SK-N-SH (cell line): ENCODE measurements at regions of chr15 and their contacts with region 1.

Region 1: GRCh38 chr15:83571820-83572707 is 81.9 kb upstream of the ADAMTSL3 start:
- DNase-seq: peak; percentile 32
- H3K4me3 ChIP-seq: no peak overlapping the region
- H3K27ac ChIP-seq: no peak overlapping the region
- H3K4me1 ChIP-seq: no peaks in the 10 kb centered on the region
- H3K27me3 ChIP-seq: no peaks in the 10 kb centered on the region; the same call in 1 of the 2 replicates
- CTCF ChIP-seq: peak; percentile 69
- EP300 ChIP-seq: no peak
- RAD21 ChIP-seq: peak; percentile 53

Region 2: GRCh38 chr15:83436458-83437158 is 135.5 kb before region 1 on chr15:
- CTCF ChIA-PET with region 1: interaction called, 18 read pairs
- POLR2A ChIA-PET with region 1: no interaction called
- DNase-seq: peak; percentile 42
- H3K4me3 ChIP-seq: no peak overlapping the region
- H3K27ac ChIP-seq: no peak overlapping the region
- H3K4me1 ChIP-seq: no peaks in the 10 kb centered on the region
- H3K27me3 ChIP-seq: no peaks in the 10 kb centered on the region; the same call in 1 of the 2 replicates
- CTCF ChIP-seq: peak; percentile 59
- EP300 ChIP-seq: no peak
- RAD21 ChIP-seq: peak; percentile 52